ENCODE measurements at regions of chr11 and their contacts with region 1.

Region 1: DNA sequence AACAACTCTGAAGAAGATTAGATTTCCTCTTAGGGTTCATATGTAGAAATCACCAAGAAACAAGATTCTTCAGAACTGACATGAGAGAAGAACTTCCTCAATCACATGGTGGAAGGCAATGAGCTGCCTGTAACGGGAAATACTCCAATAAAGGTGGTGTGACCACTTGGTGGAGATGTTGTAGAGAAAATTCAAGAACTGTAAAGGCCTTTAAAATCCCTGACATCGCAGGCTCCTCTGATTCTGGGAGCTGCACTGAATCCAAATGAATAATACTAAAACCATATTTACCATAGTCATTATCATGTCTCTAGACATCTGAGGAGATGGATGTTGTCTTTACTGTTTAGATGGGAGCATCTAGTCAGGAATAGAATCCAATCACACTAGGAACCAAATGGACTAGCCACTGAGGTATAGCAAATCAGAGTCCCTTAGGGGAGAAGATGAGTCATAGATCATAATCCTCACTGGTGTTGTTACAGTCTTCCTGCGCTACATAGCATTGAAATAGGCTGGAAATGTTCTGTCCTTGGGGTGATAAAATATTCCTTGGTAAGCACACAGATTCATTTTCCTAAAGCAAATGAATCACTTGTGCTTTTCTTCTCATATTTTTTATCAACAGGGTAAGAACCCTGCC is 321.6 kb upstream of the TENM4 start:
- DNase-seq: no peak
- ATAC-seq: peak; percentile 45

Region 2: GRCh38 chr11:79512706-79513469 is 249.5 kb before region 1 on chr11:
- intact Hi-C with region 1: no loop called
- DNase-seq: no peak
- ATAC-seq: peak; percentile 87

Region 3: DNA sequence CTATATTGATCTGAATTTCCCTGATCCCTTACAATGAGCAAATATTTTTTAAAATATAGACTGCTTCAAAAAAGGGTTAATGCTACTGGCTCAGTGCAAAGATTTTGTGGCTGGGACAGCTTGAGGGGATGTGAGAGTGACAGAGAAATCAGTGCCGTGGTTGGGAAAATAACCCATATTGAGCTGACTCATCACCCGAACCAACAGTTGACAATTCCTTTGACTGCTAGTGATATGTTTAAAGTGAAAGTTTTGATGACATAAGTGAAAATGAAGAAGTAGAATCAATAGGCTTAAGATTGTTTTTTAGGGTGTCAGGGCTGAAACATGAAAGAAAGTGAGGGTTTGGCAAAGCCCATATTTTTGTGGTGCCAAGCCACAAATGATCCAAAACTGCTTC is 64.5 kb before region 1 on chr11:
- intact Hi-C with region 1: no loop called
- DNase-seq: no peak
- ATAC-seq: no peak

Region 4: GRCh38 chr11:79727221-79727620 is 35.2 kb before region 1 on chr11:
- intact Hi-C with region 1: no loop called
- DNase-seq: no peak
- ATAC-seq: no peak

Region 5: DNA sequence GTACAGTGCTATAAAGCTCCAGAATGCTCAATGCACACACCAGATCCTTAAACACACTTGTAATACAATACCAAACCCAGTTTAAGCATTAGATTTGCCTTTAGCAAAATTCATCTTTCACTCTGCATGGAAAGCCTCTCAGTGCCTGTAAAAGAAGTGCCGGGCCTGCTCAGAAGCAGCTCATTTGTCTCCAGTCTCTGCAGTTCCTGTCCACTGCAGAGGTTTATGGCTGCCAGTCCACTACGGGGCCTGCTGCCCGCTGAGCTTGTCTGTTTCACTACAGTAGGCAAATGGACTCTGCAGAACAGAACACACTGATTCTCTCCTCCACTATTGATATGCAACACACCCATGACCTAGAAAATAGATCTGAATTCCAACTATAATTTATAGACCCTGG is 95.0 kb after region 1 on chr11:
- intact Hi-C with region 1: no loop called
- DNase-seq: no peak
- ATAC-seq: no peak

Region 6: GRCh38 chr11:80155412-80156017 is 393.1 kb after region 1 on chr11:
- intact Hi-C with region 1: loop called (anchors 5 kb)
- DNase-seq: no peak
- ATAC-seq: peak; percentile 18

Measured in left ventricle myocardium superior (tissue), 1 donor.